Tibial artery (tissue), 4 donors: ENCODE measurements at regions of chr1 and their contacts with region 1.

Region 1: GRCh38 chr1:161749509-161750407 is at the start of gene DUSP12:
- DNase-seq: peak; percentile 95 to 96
- H3K4me3 ChIP-seq: peak within 1 kb of the TSS; percentile 71 to 73
- H3K27ac ChIP-seq: peak within 1 kb of the TSS; percentile 78
- H3K4me1 ChIP-seq: peaks cover 10 to 14% (median 11%) of the 10 kb centered on the region in 4 donors
- H3K27me3 ChIP-seq: peaks cover 0 to 6% of the 10 kb centered on the region in 2 donors
- CTCF ChIP-seq: peak in 1 of 2 experiments; percentile 6

Region 2: DNA sequence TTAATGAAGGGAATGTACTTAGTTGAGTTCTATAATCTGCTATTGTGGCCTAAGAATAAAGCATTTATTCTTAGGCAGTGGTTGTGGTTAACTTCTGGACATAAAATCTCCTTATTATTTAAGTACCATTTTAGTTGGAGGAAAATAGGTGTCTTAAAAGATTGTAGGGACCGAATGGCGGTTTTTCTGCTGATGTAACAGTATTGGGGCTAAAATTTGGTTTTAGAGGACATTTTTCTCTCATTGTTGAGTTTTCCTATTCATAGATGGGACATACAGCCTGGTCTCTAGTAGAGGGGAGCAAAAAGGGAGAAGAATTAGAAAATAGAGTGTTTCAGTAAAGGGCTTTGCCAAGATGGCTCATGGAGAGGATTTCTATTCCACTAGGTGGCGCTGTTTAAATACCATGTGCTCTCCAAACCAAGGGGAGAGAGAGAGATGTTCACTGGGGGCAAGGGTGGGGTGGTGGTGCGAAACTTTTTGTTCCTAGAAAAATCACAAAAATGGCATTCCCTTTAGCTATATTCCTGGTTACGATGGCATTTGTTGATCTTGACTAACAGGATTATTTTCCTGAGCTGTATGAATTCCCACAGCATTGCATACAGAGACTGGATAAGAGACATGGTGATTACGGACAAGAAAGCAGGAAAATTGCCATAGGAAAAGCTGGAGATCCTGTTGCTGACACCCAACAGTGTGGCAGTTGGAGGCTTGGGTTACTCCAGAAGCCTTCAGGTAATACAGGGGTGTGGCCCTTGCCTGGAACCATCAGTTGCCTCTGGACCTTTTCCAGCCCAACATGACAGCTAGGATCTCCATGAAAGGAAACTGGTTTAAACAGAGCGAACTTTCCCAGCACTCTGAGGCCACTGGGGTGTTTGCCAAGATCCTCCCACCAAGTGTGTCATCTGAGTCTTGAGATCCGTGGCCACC is 262.7 kb before region 1 on chr1:
- intact Hi-C with region 1: loop called (anchors 10 kb)
- DNase-seq: peak in 1 of 2 donors; percentile 55
- H3K4me3 ChIP-seq: no peak overlapping the region
- H3K27ac ChIP-seq: no peak overlapping the region
- H3K4me1 ChIP-seq: peaks cover 0 to 4% (median 3%) of the 10 kb centered on the region in 4 donors
- H3K27me3 ChIP-seq: peaks cover 0 to 37% of the 10 kb centered on the region in 2 donors
- CTCF ChIP-seq: peak; percentile 63 to 64

Region 3: GRCh38 chr1:162056043-162056442 is 306.3 kb after region 1 on chr1:
- intact Hi-C with region 1: no loop called
- DNase-seq: peak; percentile 53 to 68
- H3K4me3 ChIP-seq: no peak overlapping the region
- H3K27ac ChIP-seq: no peak overlapping the region
- H3K4me1 ChIP-seq: peaks cover 0 to 3% (median 0%) of the 10 kb centered on the region in 4 donors
- H3K27me3 ChIP-seq: peaks cover 0 to 12% of the 10 kb centered on the region in 2 donors
- CTCF ChIP-seq: peak; percentile 82 to 97